ENCODE measurements at regions of chr14 and their contacts with region 1.

Region 1: GRCh38 chr14:70995676-70996075 is 88.4 kb downstream of the PCNX1 start:
- DNase-seq: no peak
- H3K4me3 ChIP-seq: no peak overlapping the region
- H3K27ac ChIP-seq: no peak overlapping the region
- H3K4me1 ChIP-seq: no peaks in the 10 kb centered on the region
- H3K27me3 ChIP-seq: no peaks in the 10 kb centered on the region
- CTCF ChIP-seq: no peak

Region 2: DNA sequence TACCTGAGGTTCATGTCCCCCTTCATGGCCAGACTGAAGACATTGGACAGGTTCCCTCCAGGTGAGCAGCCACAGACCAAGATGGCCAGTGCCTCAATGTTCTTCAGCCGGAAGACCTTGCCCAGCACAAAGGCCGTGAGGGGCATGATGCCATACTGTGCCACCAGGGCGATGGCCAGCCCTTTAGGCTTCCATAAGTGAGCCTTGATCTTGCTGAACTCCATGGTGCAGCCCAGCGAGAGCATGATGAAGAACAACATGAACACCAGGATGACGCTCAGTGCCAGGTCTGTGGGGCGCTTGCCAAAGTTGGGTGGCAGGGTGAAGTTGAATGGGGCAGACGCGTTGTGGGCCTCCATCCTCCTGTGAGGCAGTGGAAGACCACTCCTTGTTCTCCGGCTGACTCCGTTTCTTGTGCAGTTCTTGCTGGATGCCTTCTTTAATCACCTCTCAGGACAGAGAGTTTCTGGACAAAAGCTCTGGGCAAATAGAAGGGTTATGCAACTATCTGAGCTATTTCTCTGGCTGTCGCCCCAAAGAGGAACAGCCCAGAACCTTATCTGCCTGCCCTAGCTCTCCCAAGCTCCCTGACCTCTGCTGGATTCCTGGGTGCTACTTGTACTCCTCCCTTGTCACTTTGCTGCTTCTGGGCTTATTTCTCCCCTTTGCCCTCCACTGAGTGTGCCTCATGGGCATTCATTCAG is 1198.7 kb before region 1 on chr14 and contains the start of gene SLC10A1:
- intact Hi-C with region 1: loop called (anchors 5 kb)
- DNase-seq: no peak
- H3K4me3 ChIP-seq: no peak within 1 kb of the TSS
- H3K27ac ChIP-seq: no peak within 1 kb of the TSS
- H3K4me1 ChIP-seq: no peaks in the 10 kb centered on the region
- H3K27me3 ChIP-seq: no peaks in the 10 kb centered on the region
- CTCF ChIP-seq: no peak

Measured in tibial artery (tissue), 4 donors.